Activated CD8-positive, alpha-beta T cell treated with anti-CD3 and anti-CD28 coated beads for 36 hours (primary cell): ENCODE measurements at regions of chr11 and their contacts with region 1.

Region 1: DNA sequence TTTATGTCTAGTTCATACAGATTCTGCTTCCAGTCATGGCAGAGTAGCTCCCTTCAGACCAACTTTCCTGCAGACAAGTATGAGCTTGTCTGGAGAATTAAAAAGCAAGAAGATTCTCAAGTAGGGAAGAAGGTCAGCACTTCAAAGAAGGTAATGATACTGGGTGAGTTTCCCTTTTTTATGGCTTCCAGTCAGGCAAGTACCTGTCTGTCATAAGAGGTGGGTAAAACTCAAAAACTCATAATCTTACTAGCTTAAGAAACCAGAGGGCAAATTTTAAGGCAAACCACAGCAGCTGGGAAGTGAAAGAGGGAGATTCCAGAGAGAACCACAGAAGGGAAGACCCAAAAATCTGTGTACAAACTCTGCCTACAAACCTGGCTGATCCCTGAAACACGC is 54.2 kb downstream of the DENND5A start:
- DNase-seq: peak; percentile 34
- ATAC-seq: peak; percentile 27
- H3K4me3 Mint-ChIP-seq: no peak overlapping the region
- H3K27ac Mint-ChIP-seq: peak overlapping the region; percentile 13
- H3K4me1 Mint-ChIP-seq: peaks cover 67% of the 10 kb centered on the region
- H3K27me3 Mint-ChIP-seq: no peaks in the 10 kb centered on the region
- CTCF ChIP-seq: no peak

Region 2: DNA sequence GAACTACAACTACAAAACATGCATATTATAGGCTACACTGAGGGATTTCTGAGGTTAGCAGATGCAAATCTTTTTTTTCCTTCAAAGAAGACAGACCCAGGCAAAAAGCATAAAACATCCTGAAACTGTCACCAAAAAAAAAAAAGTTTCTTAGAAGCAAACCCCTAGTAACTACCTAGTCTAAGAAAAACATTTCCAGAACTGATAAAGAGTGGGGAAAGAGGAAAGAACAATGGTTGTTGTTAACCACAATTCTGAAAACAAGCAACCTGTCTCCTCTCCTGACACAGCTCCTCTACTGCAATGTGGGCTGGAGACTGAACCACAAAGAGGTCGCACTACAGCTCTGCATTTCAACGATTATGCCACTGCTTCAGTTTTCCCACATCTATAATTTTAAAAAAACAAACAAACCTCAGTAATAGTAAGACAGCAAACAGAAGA is 39.2 kb after region 1 on chr11:
- CTCF ChIA-PET with region 1: interaction called, 5 read pairs
- POLR2A ChIA-PET with region 1: interaction called, 3 read pairs
- intact Hi-C with region 1: loop called (anchors 5 kb)
- DNase-seq: peak; percentile 64
- ATAC-seq: peak; percentile 83
- H3K4me3 Mint-ChIP-seq: peak overlapping the region; percentile 29
- H3K27ac Mint-ChIP-seq: peak overlapping the region; percentile 28
- H3K4me1 Mint-ChIP-seq: peaks cover 59% of the 10 kb centered on the region
- H3K27me3 Mint-ChIP-seq: no peaks in the 10 kb centered on the region
- CTCF ChIP-seq: no peak

Region 3: DNA sequence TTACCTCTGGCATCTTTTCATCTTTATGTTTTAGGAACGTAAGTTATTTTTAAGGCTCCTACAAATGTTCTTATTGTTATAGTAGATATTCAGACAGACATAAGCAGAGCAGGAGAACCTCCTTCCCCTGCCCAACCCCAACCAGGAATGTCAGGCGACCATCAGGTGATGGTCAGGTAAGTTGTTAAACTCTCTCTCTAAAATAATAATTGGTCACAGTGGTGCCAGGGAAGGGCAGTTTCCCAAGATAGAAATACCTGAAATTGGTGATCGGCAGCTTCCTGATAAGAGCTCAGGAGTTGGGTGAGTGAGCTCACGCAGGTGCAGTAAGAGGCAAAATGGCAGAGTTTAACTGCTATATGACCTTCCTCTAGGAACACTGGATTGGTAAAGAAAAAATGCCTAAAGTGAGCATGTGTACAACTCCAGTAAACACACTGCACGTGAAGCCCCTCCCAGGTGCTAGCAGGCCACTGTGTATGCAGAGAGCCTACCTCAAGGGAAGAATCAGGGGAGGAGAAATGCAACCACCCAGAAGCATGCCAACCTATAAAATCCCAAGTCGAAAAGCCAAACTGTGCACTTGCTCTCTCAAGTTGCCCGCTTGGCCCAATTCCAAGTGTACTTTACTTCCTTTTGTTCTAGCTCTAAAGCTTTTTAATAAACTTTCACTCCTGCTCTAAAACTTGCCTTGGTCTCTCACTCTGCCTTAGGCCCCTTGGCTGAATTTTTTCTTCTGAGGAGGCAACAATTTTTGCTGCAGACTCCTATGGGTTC is 809.2 kb after region 1 on chr11:
- CTCF ChIA-PET with region 1: no interaction called
- POLR2A ChIA-PET with region 1: no interaction called
- intact Hi-C with region 1: no loop called
- DNase-seq: no peak
- ATAC-seq: no peak
- H3K4me3 Mint-ChIP-seq: no peak overlapping the region
- H3K27ac Mint-ChIP-seq: no peak overlapping the region
- H3K4me1 Mint-ChIP-seq: peaks cover 12% of the 10 kb centered on the region
- H3K27me3 Mint-ChIP-seq: no peaks in the 10 kb centered on the region
- CTCF ChIP-seq: no peak